ENCODE measurements at regions of chr5 and their contacts with region 1.

Region 1: DNA sequence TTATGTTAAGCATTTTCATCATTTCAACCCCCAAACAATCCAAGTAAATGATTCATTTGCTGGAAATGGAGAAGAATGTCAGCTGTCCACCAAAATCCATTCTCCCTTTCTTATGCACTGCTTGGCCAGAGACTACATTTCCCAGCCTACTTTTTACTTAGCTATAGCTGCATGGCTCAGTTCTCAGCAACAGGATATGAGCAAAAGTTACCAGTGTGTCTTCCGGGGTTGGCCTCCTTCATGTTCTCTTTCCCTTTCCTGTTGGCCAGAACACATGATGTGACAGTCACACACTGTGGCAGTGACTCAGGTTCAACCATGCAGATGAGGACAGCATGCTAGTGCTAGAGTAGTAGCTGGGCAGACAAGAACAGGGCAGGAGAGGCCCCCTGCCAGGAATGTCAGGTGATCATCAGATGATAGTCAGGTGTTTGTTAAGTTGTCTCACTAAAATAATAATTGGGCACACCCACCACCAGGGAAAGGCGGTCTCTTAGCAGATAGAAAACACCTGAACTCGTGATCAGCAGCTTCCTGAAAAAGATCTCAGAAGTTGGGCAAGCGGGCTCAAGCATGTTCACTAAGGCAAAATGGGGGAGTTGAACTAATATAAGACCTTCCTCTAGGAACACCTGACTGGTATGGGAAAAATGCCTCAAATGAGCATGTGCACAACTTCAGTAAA is 12.2 kb downstream of the GPR150 start:
- DNase-seq: peak; percentile 59
- H3K4me3 Mint-ChIP-seq: peak overlapping the region; percentile 4
- H3K27ac Mint-ChIP-seq: peak overlapping the region; percentile 83
- H3K4me1 Mint-ChIP-seq: peaks cover 13% of the 10 kb centered on the region
- H3K27me3 Mint-ChIP-seq: peaks cover 8% of the 10 kb centered on the region

Region 2: GRCh38 chr5:95565280-95565920 is 66.7 kb before region 1 on chr5:
- intact Hi-C with region 1: no loop called
- DNase-seq: no peak
- H3K4me3 Mint-ChIP-seq: no peak overlapping the region
- H3K27ac Mint-ChIP-seq: no peak overlapping the region
- H3K4me1 Mint-ChIP-seq: no peaks in the 10 kb centered on the region
- H3K27me3 Mint-ChIP-seq: peaks cover 2% of the 10 kb centered on the region

Region 3: GRCh38 chr5:95591490-95591901 is 40.6 kb before region 1 on chr5:
- intact Hi-C with region 1: loop called (anchors 1 kb)
- DNase-seq: no peak
- H3K4me3 Mint-ChIP-seq: no peak overlapping the region
- H3K27ac Mint-ChIP-seq: peak overlapping the region; percentile 24
- H3K4me1 Mint-ChIP-seq: peaks cover 23% of the 10 kb centered on the region
- H3K27me3 Mint-ChIP-seq: peaks cover 2% of the 10 kb centered on the region

Region 4: GRCh38 chr5:96177303-96177869 is 545.3 kb after region 1 on chr5:
- intact Hi-C with region 1: no loop called
- DNase-seq: no peak
- H3K4me3 Mint-ChIP-seq: no peak overlapping the region
- H3K27ac Mint-ChIP-seq: no peak overlapping the region
- H3K4me1 Mint-ChIP-seq: no peaks in the 10 kb centered on the region
- H3K27me3 Mint-ChIP-seq: no peaks in the 10 kb centered on the region